Astrocyte of the spinal cord (primary cell): ENCODE measurements at regions of chr9 and their contacts with region 1.

Region 1: DNA sequence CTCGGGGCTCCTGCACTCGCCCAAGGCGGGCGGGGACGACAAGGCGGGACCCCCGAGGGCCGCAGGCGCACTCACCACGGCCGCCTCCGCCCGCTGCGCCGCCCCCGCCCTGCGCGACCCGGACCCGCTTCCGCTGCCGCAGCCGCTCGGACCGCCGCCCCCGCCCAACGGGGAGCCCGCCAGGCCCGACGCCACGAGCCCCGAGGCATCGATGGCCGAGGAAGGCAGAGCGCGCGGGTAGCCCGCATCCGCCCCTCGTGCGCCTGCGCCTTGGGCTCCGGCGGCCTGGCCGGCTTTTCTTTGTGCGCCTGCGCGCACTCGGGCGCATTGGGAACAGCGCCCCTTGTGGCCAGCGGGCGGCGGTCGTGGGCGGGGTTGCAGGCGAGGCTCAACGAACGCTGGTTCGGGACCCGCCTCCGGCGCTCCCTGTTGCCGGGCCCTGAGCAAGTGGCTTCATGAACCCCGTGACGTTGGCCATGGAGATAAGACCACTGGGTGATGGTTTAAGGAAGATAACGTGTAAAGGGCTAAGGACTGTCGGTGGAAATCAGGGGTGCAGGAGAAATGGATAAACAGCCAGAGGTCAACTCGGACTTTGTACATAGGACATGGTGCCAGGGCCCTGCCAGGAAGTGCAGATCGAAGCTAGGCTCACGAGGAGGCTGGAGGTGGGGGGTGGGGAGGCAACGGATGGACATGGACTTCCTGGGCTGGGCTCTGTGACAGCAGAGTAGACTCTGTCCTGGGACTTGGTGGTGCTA is at the starts of genes C8G and FBXW5:
- DNase-seq: peak; percentile 92
- H3K4me3 ChIP-seq: peak within 1 kb of the TSS; percentile 75
- CTCF ChIP-seq: peak; percentile 93

Region 2: DNA sequence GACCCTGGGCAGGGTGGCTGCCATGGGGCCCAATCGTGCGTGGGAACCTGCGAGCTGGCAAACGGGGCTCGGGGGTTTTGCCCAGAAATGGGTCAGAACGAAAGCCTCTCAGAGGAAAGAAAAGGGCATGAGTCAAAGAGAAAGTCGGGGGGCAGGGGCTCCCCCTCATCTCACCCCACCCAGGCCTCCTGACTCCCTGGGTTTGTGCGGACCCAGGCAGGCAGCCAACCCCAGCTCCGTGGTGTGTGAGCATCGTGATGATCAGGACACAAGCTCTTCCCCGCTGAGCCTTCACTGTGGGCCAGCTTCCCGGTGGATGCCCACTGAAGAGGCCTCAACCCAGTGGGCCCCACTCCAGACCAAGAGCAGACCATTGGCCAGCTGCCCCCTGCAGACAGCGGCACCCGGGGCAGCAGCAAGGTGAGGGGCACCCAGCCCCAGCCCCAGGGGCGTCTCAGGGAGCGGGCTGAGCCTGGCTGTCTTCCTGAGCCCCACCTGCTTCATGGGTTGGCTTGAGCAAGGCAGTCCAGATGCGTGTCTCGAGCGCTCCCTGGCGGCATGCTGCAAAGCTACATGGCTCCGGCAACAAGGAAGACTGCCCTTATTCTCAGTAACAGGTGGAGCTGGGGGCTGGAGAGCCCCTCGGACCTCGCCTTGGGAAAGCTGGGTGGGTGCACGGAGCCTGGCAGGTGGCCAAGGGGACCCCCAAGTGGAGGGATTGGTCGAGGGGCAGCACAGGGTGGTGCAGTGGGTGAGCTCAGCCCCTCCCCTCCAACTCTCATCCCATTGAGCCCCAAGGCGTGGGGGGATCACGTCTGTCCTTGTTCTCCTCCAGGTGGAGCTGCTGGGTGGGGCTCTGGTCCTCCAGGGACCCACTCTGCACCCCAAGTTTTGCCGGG is 90.4 kb after region 1 on chr9:
- in situ Hi-C with region 1: loop called (anchors 25 kb)
- DNase-seq: peak; percentile 79
- H3K4me3 ChIP-seq: no peak overlapping the region
- CTCF ChIP-seq: peak; percentile 98